Activated CD4-positive, alpha-beta T cell treated with anti-CD3 and anti-CD28 coated beads for 36 hours (primary cell): ENCODE measurements at regions of chr16 and their contacts with region 1.

Region 1: DNA sequence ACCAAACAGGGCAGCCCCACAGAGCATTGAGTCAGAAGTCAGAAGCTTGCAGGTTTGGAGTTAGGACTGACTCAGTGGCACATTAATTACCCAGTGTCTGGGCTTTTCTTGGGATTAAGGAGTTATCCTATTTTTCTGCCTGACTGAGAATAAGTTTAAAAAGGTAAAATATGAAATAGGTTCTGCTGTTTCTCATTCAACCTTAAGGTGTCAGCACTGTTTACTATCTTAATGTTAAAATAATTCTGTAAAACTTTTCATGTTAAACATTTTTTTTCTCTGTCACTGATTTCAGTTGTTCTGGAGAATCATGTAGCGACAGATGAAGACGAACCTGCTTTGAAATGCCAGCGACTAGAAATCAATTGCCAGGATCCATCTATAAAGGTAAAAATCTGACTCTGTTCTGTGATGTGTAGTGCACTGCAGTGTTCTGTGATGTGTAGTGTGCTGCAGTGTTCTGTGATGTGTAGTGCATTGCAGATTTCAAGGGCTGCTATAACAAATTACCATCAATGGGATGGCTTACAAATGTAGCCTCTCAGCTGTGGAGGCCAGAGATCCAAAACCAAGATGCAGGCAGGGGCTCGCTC is 128.0 kb downstream of the LAT start:
- DNase-seq: no peak
- ATAC-seq: no peak
- H3K4me3 Mint-ChIP-seq: no peak overlapping the region
- H3K27ac Mint-ChIP-seq: no peak overlapping the region
- H3K4me1 Mint-ChIP-seq: peaks cover 50% of the 10 kb centered on the region
- H3K27me3 Mint-ChIP-seq: no peaks in the 10 kb centered on the region

Region 2: GRCh38 chr16:28915181-28915580 is 197.7 kb before region 1 on chr16:
- CTCF ChIA-PET with region 1: no interaction called
- POLR2A ChIA-PET with region 1: no interaction called
- intact Hi-C with region 1: no loop called
- DNase-seq: no peak
- ATAC-seq: no peak
- H3K4me3 Mint-ChIP-seq: no peak overlapping the region
- H3K27ac Mint-ChIP-seq: no peak overlapping the region
- H3K4me1 Mint-ChIP-seq: peaks cover 2% of the 10 kb centered on the region
- H3K27me3 Mint-ChIP-seq: no peaks in the 10 kb centered on the region

Region 3: GRCh38 chr16:29148867-29149272 is 36.0 kb after region 1 on chr16:
- CTCF ChIA-PET with region 1: no interaction called
- POLR2A ChIA-PET with region 1: no interaction called
- intact Hi-C with region 1: loop called in 1 of 2 experiments (anchors 5 kb)
- DNase-seq: peak; percentile 76
- ATAC-seq: peak; percentile 78
- H3K4me3 Mint-ChIP-seq: peak overlapping the region; percentile 36
- H3K27ac Mint-ChIP-seq: peak overlapping the region; percentile 38
- H3K4me1 Mint-ChIP-seq: peaks cover 47% of the 10 kb centered on the region
- H3K27me3 Mint-ChIP-seq: no peaks in the 10 kb centered on the region